PC-9 (cell line): ENCODE measurements at regions of chr1 and their contacts with region 1.

Region 1: DNA sequence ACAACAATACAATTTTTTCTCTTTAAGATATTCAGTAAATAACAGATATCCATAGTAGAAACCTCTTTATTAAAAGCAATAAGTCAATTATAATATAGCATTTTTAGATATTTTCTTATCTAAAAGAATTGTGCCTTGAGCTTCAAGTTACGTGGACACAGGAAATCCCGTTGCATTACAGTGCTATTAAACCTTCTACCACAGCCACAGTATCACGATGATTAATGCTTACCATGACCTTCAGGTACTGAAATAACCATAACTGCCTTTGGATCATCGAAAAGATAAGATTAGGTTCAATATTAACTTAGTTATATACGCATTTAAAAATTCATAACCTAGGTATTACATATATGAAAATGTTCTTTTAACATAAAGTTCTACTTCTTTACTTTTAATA is 17.9 kb downstream of the B3GALNT2 start:
- DNase-seq: no peak
- H3K4me3 ChIP-seq: no peak overlapping the region
- H3K27ac ChIP-seq: no peak overlapping the region
- H3K4me1 ChIP-seq: no peaks in the 10 kb centered on the region
- H3K27me3 ChIP-seq: no peaks in the 10 kb centered on the region
- CTCF ChIP-seq: no peak

Region 2: GRCh38 chr1:235473806-235474205 is 12.5 kb before region 1 on chr1:
- CTCF ChIA-PET with region 1: no interaction called
- POLR2A ChIA-PET with region 1: no interaction called
- intact Hi-C with region 1: loop called (anchors 2 kb)
- DNase-seq: no peak
- H3K4me3 ChIP-seq: no peak overlapping the region
- H3K27ac ChIP-seq: no peak overlapping the region
- H3K4me1 ChIP-seq: peaks cover 11% of the 10 kb centered on the region
- H3K27me3 ChIP-seq: no peaks in the 10 kb centered on the region
- CTCF ChIP-seq: no peak